ENCODE measurements at regions of chr5 and their contacts with region 1.

Region 1: DNA sequence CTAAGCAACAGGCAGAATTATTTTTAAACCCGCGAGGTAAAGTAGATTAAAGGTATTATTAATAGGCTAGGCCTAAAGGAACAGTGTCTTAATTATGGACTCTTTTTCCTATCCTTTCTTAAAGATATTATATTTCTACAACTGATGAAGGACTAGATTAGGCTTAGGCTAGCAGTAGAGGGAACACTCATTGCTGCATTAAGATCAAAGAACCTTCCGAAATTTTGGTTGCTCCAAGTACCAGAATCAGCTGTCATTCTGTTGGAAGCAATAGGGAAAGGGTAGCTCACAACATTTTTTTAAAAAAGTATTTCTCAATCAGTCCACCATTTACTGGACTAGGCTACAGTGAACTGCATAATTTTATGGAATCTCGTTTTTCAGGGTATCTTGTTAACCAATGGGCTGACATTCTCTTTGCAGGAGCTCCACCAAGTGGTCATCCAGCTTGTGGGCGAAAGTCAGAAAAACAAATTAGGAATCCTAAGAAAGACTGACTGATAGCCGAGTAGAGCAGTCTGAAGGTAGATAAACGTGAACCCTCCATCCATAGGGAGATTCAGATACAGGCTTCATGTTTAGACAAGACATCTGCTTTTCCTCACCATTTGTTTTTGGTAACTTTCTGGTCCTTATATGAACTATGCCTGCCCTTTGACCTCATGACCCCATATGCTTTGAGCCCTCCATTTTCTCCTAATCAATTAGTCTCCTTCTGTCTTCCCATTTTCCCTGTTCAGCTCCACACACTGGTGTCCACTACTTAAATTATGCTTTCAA is 103.6 kb upstream of the CHD1 start:
- DNase-seq: no peak
- ATAC-seq: peak; percentile 56
- H3K4me3 ChIP-seq: peak overlapping the region; percentile 33
- H3K27ac ChIP-seq: peak overlapping the region; percentile 69
- H3K4me1 ChIP-seq: peaks cover 46% of the 10 kb centered on the region
- H3K27me3 ChIP-seq: no peaks in the 10 kb centered on the region
- CTCF ChIP-seq: peak; percentile 60 to 85 (median 79)
- EP300 ChIP-seq: no peak
- POLR2A ChIP-seq: no peak
- RAD21 ChIP-seq: peak; percentile 99

Region 2: GRCh38 chr5:98768160-98769005 is 264.0 kb before region 1 on chr5:
- CTCF ChIA-PET with region 1: interaction called, 21 read pairs
- POLR2A ChIA-PET with region 1: no interaction called
- RAD21 ChIA-PET with region 1: interaction called, 4 read pairs
- SMC1A ChIA-PET with region 1: interaction called, 3 read pairs
- in situ Hi-C with region 1: loop called (anchors 10 kb)
- intact Hi-C with region 1: loop called (anchors 2 kb)
- DNase-seq: no peak
- ATAC-seq: peak; percentile 37
- H3K4me3 ChIP-seq: peak overlapping the region; percentile 79
- H3K27ac ChIP-seq: no peak overlapping the region
- H3K4me1 ChIP-seq: peaks cover 12% of the 10 kb centered on the region
- H3K27me3 ChIP-seq: peaks cover 3 to 9% of the 10 kb centered on the region in 2 experiments; a peak in 3 of 4 replicates
- CTCF ChIP-seq: peak; percentile 82 to 98 (median 93)
- EP300 ChIP-seq: no peak
- POLR2A ChIP-seq: no peak
- RAD21 ChIP-seq: peak; percentile 89

Region 3: GRCh38 chr5:98816582-98817222 is 215.7 kb before region 1 on chr5:
- CTCF ChIA-PET with region 1: no interaction called
- POLR2A ChIA-PET with region 1: no interaction called
- RAD21 ChIA-PET with region 1: no interaction called
- SMC1A ChIA-PET with region 1: no interaction called
- in situ Hi-C with region 1: no loop called
- intact Hi-C with region 1: no loop called
- DNase-seq: no peak
- ATAC-seq: no peak
- H3K4me3 ChIP-seq: no peak overlapping the region
- H3K27ac ChIP-seq: no peak overlapping the region
- H3K4me1 ChIP-seq: no peaks in the 10 kb centered on the region
- H3K27me3 ChIP-seq: no peaks in the 10 kb centered on the region
- CTCF ChIP-seq: no peak
- EP300 ChIP-seq: no peak
- POLR2A ChIP-seq: no peak
- RAD21 ChIP-seq: no peak

Region 4: GRCh38 chr5:98872674-98873073 is 159.8 kb before region 1 on chr5:
- CTCF ChIA-PET with region 1: interaction called, 10 read pairs
- POLR2A ChIA-PET with region 1: interaction called, 3 read pairs
- RAD21 ChIA-PET with region 1: no interaction called
- SMC1A ChIA-PET with region 1: interaction called, 5 read pairs
- in situ Hi-C with region 1: no loop called
- intact Hi-C with region 1: no loop called
- DNase-seq: no peak
- ATAC-seq: no peak
- H3K4me3 ChIP-seq: no peak overlapping the region
- H3K27ac ChIP-seq: no peak overlapping the region
- H3K4me1 ChIP-seq: no peaks in the 10 kb centered on the region
- H3K27me3 ChIP-seq: no peaks in the 10 kb centered on the region
- CTCF ChIP-seq: no peak
- EP300 ChIP-seq: no peak
- POLR2A ChIP-seq: no peak
- RAD21 ChIP-seq: no peak

Region 5: GRCh38 chr5:98911280-98912040 is 121.0 kb before region 1 on chr5:
- CTCF ChIA-PET with region 1: interaction called, 40 read pairs
- POLR2A ChIA-PET with region 1: interaction called, 4 read pairs
- RAD21 ChIA-PET with region 1: interaction called, 21 read pairs
- SMC1A ChIA-PET with region 1: interaction called, 37 read pairs
- in situ Hi-C with region 1: loop called (anchors 10 kb)
- intact Hi-C with region 1: loop called (anchors 1 kb)
- DNase-seq: no peak
- ATAC-seq: peak; percentile 22; the same call in 2 of the 3 replicates
- H3K4me3 ChIP-seq: no peak overlapping the region
- H3K27ac ChIP-seq: no peak overlapping the region
- H3K4me1 ChIP-seq: no peaks in the 10 kb centered on the region; the same call in 1 of the 2 replicates
- H3K27me3 ChIP-seq: no peaks in the 10 kb centered on the region
- CTCF ChIP-seq: no peak
- EP300 ChIP-seq: no peak
- POLR2A ChIP-seq: no peak
- RAD21 ChIP-seq: no peak

Region 6: GRCh38 chr5:98969400-98969799 is 63.0 kb before region 1 on chr5:
- CTCF ChIA-PET with region 1: interaction called, 5 read pairs
- POLR2A ChIA-PET with region 1: no interaction called
- RAD21 ChIA-PET with region 1: interaction called, 5 read pairs
- SMC1A ChIA-PET with region 1: interaction called, 4 read pairs
- in situ Hi-C with region 1: no loop called
- intact Hi-C with region 1: loop called (anchors 1 kb)
- DNase-seq: no peak
- ATAC-seq: no peak
- H3K4me3 ChIP-seq: no peak overlapping the region
- H3K27ac ChIP-seq: no peak overlapping the region
- H3K4me1 ChIP-seq: no peaks in the 10 kb centered on the region
- H3K27me3 ChIP-seq: no peaks in the 10 kb centered on the region
- CTCF ChIP-seq: 0 out of 6 replicates have a peak, but pooled peaks of 1 of the 3 experiments have one; percentile 2
- EP300 ChIP-seq: no peak
- POLR2A ChIP-seq: no peak
- RAD21 ChIP-seq: peak; percentile 37; the same call in 1 of the 2 replicates

Region 7: GRCh38 chr5:99141534-99142128 is 109.2 kb after region 1 on chr5:
- CTCF ChIA-PET with region 1: no interaction called
- POLR2A ChIA-PET with region 1: no interaction called
- RAD21 ChIA-PET with region 1: no interaction called
- SMC1A ChIA-PET with region 1: no interaction called
- in situ Hi-C with region 1: no loop called
- intact Hi-C with region 1: no loop called
- DNase-seq: no peak
- ATAC-seq: no peak
- H3K4me3 ChIP-seq: no peak overlapping the region
- H3K27ac ChIP-seq: no peak overlapping the region
- H3K4me1 ChIP-seq: no peaks in the 10 kb centered on the region
- H3K27me3 ChIP-seq: no peaks in the 10 kb centered on the region
- CTCF ChIP-seq: no peak
- EP300 ChIP-seq: no peak
- POLR2A ChIP-seq: no peak
- RAD21 ChIP-seq: no peak